HepG2 (cell line): ENCODE measurements at regions of chrX and their contacts with region 1.

Region 1: DNA sequence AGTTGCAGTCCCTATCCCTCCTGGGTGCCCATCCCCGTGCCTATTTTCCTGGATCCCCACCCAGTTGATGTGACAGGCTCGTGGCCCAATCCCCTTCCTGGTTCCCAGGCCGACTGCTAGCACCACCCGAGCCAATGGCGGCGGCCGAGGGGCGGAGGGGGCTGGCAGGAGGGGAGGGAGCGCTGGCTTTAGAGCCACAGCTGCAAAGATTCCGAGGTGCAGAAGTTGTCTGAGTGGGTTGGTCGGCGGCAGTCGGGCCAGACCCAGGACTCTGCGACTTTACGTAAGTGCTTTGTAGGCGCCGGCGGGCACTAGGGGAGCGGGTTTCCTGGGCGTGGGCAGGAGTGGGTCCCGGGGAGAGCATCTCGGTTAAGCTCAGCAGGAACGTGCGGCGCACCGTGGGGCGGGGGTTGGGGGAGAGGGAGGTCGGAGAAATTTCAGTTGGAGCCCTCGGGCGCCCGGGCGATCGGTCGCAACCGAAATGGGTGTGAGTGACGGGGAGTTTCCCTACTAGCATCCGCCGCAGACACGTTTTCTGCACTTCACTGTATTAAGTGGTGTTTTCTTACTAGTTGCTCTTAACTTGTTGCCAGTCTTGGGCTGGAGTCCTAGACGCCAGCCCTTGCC is at the start of gene PLS3:
- DNase-seq: peak; percentile 77
- ATAC-seq: peak; percentile 91
- H3K4me3 ChIP-seq: peak within 1 kb of the TSS; percentile 67 to 78 (median 69)
- H3K27ac ChIP-seq: peak within 1 kb of the TSS; percentile 78
- H3K4me1 ChIP-seq: peaks cover 37% of the 10 kb centered on the region
- H3K27me3 ChIP-seq: no peaks in the 10 kb centered on the region; a peak in 1 of 5 replicates
- CTCF ChIP-seq: no peak
- EP300 ChIP-seq: no peak
- POLR2A ChIP-seq: peak; percentile 76 to 78
- RAD21 ChIP-seq: no peak
- total RNA-seq, gene PLS3: 99.9 and 173 TPM in 2 replicates

Region 2: GRCh38 chrX:115174548-115174947 is 386.5 kb before region 1 on chrX:
- CTCF ChIA-PET with region 1: no interaction called
- POLR2A ChIA-PET with region 1: no interaction called
- in situ Hi-C with region 1: no loop called
- intact Hi-C with region 1: loop called (anchors 5 kb)
- DNase-seq: no peak
- ATAC-seq: no peak
- H3K4me3 ChIP-seq: no peak overlapping the region
- H3K27ac ChIP-seq: no peak overlapping the region
- H3K4me1 ChIP-seq: no peaks in the 10 kb centered on the region
- H3K27me3 ChIP-seq: no peaks in the 10 kb centered on the region
- CTCF ChIP-seq: no peak
- EP300 ChIP-seq: no peak
- POLR2A ChIP-seq: no peak
- RAD21 ChIP-seq: no peak

Region 3: DNA sequence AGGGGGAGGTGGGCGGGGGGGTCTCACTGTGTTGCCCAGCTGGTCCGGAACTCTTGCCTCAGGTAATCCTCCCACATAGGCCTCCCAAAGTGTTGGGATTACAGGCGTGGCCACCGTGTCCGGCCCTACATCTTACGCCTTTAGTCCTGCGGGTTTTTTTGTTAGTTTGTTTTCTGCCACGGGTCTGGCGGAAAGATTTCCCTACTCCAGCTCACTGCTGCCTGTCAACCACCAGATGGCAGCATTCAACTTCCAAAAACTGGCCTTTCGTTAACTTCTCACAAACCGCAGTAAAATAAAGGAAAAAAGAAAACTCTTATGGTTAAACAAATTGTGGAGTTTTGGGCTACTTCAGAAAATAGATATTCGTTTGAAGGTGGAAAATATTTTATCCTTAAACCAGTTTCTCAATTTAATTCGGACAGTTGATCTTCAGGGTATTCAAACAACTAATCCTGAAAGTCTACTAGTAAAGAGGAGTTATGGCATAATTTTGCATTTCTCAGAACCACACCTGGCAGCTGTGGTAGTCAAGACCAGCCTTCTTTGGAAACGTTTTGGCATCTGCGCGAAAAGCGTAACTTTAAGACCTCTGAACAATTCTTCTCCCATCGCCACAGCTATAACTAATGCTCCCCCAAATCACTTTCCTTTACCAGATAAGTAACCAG is 230.5 kb before region 1 on chrX:
- CTCF ChIA-PET with region 1: no interaction called
- POLR2A ChIA-PET with region 1: no interaction called
- in situ Hi-C with region 1: loop called (anchors 5 kb)
- intact Hi-C with region 1: no loop called
- DNase-seq: peak; percentile 36
- ATAC-seq: no peak; the same call in 2 of the 3 replicates
- H3K4me3 ChIP-seq: no peak overlapping the region; a peak in 1 of 6 replicates
- H3K27ac ChIP-seq: no peak overlapping the region
- H3K4me1 ChIP-seq: peaks cover 13% of the 10 kb centered on the region
- H3K27me3 ChIP-seq: no peaks in the 10 kb centered on the region
- CTCF ChIP-seq: peak; percentile 66
- EP300 ChIP-seq: no peak
- POLR2A ChIP-seq: no peak
- RAD21 ChIP-seq: peak; percentile 53

Region 4: GRCh38 chrX:115344885-115345614 is 216.0 kb before region 1 on chrX:
- CTCF ChIA-PET with region 1: no interaction called
- POLR2A ChIA-PET with region 1: interaction called, 18 read pairs
- in situ Hi-C with region 1: no loop called
- intact Hi-C with region 1: loop called (anchors 5 kb)
- DNase-seq: peak; percentile 91
- ATAC-seq: peak; percentile 92
- H3K4me3 ChIP-seq: peak overlapping the region in 2 of 3 experiments; percentile 40 to 44; a peak in 2 of 6 replicates
- H3K27ac ChIP-seq: peak overlapping the region; percentile 98
- H3K4me1 ChIP-seq: peaks cover 73% of the 10 kb centered on the region
- H3K27me3 ChIP-seq: no peaks in the 10 kb centered on the region
- CTCF ChIP-seq: no peak
- EP300 ChIP-seq: peak in 1 of 2 experiments; percentile 88; a peak in 2 of 4 replicates
- POLR2A ChIP-seq: no peak; a peak in 1 of 4 replicates
- RAD21 ChIP-seq: no peak